WTC11 (cell line): ENCODE measurements at regions of chr17 and their contacts with region 1.

Region 1: GRCh38 chr17:41695954-41696756 is 7.5 kb downstream of the EIF1 start:
- DNase-seq: peak; percentile 64
- ATAC-seq: peak; percentile 12; the same call in 1 of the 2 replicates
- H3K4me3 Mint-ChIP-seq: no peak overlapping the region
- H3K27ac Mint-ChIP-seq: no peak overlapping the region
- H3K4me1 Mint-ChIP-seq: peaks cover 3% of the 10 kb centered on the region; the same call in 1 of the 2 replicates
- H3K27me3 Mint-ChIP-seq: peaks cover 25% of the 10 kb centered on the region
- CTCF ChIP-seq: peak; percentile 76

Region 2: DNA sequence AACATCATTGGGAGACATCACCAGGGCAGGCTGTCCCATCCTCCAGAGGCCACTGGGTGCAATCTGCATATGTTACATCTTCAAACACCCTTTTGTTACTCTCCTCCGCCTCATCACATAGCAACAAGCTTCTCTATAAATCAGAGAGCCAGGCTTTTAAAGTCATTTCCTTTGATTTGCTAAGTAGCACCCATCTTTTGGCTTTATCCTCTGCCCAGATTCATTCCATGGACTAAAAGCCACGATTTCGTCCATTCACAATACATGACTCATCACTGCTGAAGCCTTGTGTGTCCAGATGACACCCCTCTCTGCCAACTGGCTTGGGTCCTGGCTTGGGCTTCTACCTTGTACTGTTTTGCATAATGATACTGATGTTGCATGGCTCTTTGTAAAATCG is 253.4 kb before region 1 on chr17:
- CTCF ChIA-PET with region 1: no interaction called
- POLR2A ChIA-PET with region 1: no interaction called
- DNase-seq: no peak
- ATAC-seq: no peak
- H3K4me3 Mint-ChIP-seq: no peak overlapping the region
- H3K27ac Mint-ChIP-seq: no peak overlapping the region
- H3K4me1 Mint-ChIP-seq: 0 out of 2 replicates have a peak, but pooled peaks cover 4% of the 10 kb centered on the region
- H3K27me3 Mint-ChIP-seq: peaks cover 9% of the 10 kb centered on the region
- CTCF ChIP-seq: no peak

Region 3: GRCh38 chr17:41510251-41511065 is 185.7 kb before region 1 on chr17:
- CTCF ChIA-PET with region 1: no interaction called
- POLR2A ChIA-PET with region 1: no interaction called
- DNase-seq: no peak
- ATAC-seq: peak; percentile 72
- H3K4me3 Mint-ChIP-seq: no peak overlapping the region
- H3K27ac Mint-ChIP-seq: peak overlapping the region; percentile 41; the same call in 1 of the 2 replicates
- H3K4me1 Mint-ChIP-seq: peaks cover 22% of the 10 kb centered on the region
- H3K27me3 Mint-ChIP-seq: no peaks in the 10 kb centered on the region; the same call in 1 of the 2 replicates
- CTCF ChIP-seq: no peak

Region 4: GRCh38 chr17:41655611-41656351 is 40.4 kb before region 1 on chr17:
- CTCF ChIA-PET with region 1: no interaction called
- POLR2A ChIA-PET with region 1: no interaction called
- DNase-seq: peak; percentile 76
- ATAC-seq: peak; percentile 78
- H3K4me3 Mint-ChIP-seq: no peak overlapping the region
- H3K27ac Mint-ChIP-seq: no peak overlapping the region
- H3K4me1 Mint-ChIP-seq: peaks cover 11% of the 10 kb centered on the region
- H3K27me3 Mint-ChIP-seq: no peaks in the 10 kb centered on the region
- CTCF ChIP-seq: no peak

Region 5: GRCh38 chr17:41678907-41679739 is 17.0 kb before region 1 on chr17:
- CTCF ChIA-PET with region 1: interaction called, 33 read pairs
- POLR2A ChIA-PET with region 1: interaction called, 42 read pairs
- DNase-seq: no peak
- ATAC-seq: peak; percentile 48
- H3K4me3 Mint-ChIP-seq: no peak overlapping the region
- H3K27ac Mint-ChIP-seq: peak overlapping the region; percentile 50; the same call in 1 of the 2 replicates
- H3K4me1 Mint-ChIP-seq: peaks cover 50% of the 10 kb centered on the region
- H3K27me3 Mint-ChIP-seq: peaks cover 2% of the 10 kb centered on the region; the same call in 1 of the 2 replicates
- CTCF ChIP-seq: no peak

Region 6: GRCh38 chr17:41724476-41725050 is 28.4 kb after region 1 on chr17:
- CTCF ChIA-PET with region 1: interaction called, 13 read pairs
- POLR2A ChIA-PET with region 1: no interaction called
- DNase-seq: no peak
- ATAC-seq: no peak
- H3K4me3 Mint-ChIP-seq: no peak overlapping the region
- H3K27ac Mint-ChIP-seq: no peak overlapping the region
- H3K4me1 Mint-ChIP-seq: 0 out of 2 replicates have a peak, but pooled peaks cover 6% of the 10 kb centered on the region
- H3K27me3 Mint-ChIP-seq: peaks cover 5% of the 10 kb centered on the region; the same call in 1 of the 2 replicates
- CTCF ChIP-seq: no peak

Region 7: GRCh38 chr17:41738077-41738735 is 42.1 kb after region 1 on chr17:
- CTCF ChIA-PET with region 1: interaction called, 14 read pairs
- POLR2A ChIA-PET with region 1: no interaction called
- DNase-seq: peak; percentile 91
- ATAC-seq: peak; percentile 71
- H3K4me3 Mint-ChIP-seq: no peak overlapping the region
- H3K27ac Mint-ChIP-seq: peak overlapping the region; percentile 82
- H3K4me1 Mint-ChIP-seq: peaks cover 22% of the 10 kb centered on the region
- H3K27me3 Mint-ChIP-seq: peaks cover 47% of the 10 kb centered on the region
- CTCF ChIP-seq: peak; percentile 98

Region 8: DNA sequence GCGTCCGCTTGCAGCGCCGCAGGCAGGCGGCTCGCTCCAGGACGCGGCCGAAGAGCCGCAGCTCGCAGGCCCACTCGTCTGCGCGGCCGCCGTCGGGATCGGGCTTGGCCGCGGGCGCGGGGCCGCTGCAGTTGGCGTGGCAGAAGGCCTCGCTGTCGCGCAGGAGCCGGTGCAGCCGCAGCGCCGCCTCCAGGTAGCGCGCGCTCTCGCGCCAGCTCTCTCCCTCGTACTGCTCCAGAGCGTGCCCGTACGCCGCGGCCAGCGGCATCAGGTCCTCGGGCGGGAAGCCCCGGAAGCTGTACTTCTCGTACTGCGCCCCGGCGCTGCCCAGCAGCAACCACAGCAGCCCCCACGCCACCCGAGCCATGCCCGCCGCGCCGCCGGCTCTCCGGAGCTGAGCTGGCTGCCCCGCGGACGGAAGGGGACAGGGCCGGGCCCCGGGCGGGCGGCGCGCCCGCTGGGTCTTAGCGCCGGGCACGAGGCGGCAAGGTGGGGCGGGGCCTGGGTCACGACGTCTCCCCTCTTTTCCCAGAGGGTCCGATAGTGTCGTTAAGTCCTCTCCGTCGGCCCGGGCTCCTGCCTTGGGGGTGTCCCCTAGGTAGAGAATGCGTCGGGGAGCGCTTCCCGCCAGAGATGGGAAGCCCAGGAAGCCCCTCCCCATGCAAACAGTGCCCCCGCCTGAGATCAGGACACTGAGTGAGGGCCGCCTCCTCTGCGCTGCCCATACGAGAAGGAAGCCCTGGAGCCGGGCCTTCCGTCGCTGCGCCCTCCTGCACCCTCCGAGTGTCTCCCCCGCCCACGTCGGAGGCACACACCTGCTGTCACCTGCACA is 115.6 kb after region 1 on chr17 and contains the start of gene P3H4:
- CTCF ChIA-PET with region 1: interaction called, 12 read pairs
- POLR2A ChIA-PET with region 1: no interaction called
- DNase-seq: peak; percentile 78
- ATAC-seq: peak; percentile 44
- H3K4me3 Mint-ChIP-seq: peak within 1 kb of the TSS; percentile 98
- H3K27ac Mint-ChIP-seq: peak within 1 kb of the TSS; percentile 95
- H3K4me1 Mint-ChIP-seq: peaks cover 24% of the 10 kb centered on the region
- H3K27me3 Mint-ChIP-seq: peaks cover 7% of the 10 kb centered on the region
- CTCF ChIP-seq: peak; percentile 40; the same call in 1 of the 2 replicates
- total RNA-seq, gene P3H4: 32.1 to 34.6 TPM (median 33.5 TPM) in 3 replicates